ENCODE measurements at regions of chr6 and their contacts with region 1.

Region 1: GRCh38 chr6:116060572-116061283 is at the start of gene FRK:
- DNase-seq: peak; percentile 93
- ATAC-seq: peak; percentile 97
- H3K4me3 ChIP-seq: peak within 1 kb of the TSS; percentile 74 to 90 (median 88)
- H3K27ac ChIP-seq: peak within 1 kb of the TSS; percentile 87
- H3K4me1 ChIP-seq: peaks cover 37% of the 10 kb centered on the region
- H3K27me3 ChIP-seq: no peaks in the 10 kb centered on the region; a peak in 1 of 5 replicates
- CTCF ChIP-seq: no peak
- EP300 ChIP-seq: 0 out of 4 replicates have a peak, but pooled peaks of 1 of the 2 experiments have one; percentile 34
- POLR2A ChIP-seq: peak; percentile 78 to 88
- RAD21 ChIP-seq: no peak
- total RNA-seq, gene FRK: 2.9 and 4.5 TPM in 2 replicates

Region 2: GRCh38 chr6:116010790-116011401 is 49.8 kb before region 1 on chr6:
- CTCF ChIA-PET with region 1: interaction called, 3 read pairs
- POLR2A ChIA-PET with region 1: interaction called, 23 read pairs
- in situ Hi-C with region 1: no loop called
- intact Hi-C with region 1: loop called (anchors 1 kb)
- DNase-seq: peak; percentile 75
- ATAC-seq: peak; percentile 84
- H3K4me3 ChIP-seq: no peak overlapping the region
- H3K27ac ChIP-seq: no peak overlapping the region
- H3K4me1 ChIP-seq: peaks cover 54% of the 10 kb centered on the region
- H3K27me3 ChIP-seq: no peaks in the 10 kb centered on the region
- CTCF ChIP-seq: peak; percentile 89
- EP300 ChIP-seq: no peak
- POLR2A ChIP-seq: no peak
- RAD21 ChIP-seq: peak; percentile 66

Region 3: DNA sequence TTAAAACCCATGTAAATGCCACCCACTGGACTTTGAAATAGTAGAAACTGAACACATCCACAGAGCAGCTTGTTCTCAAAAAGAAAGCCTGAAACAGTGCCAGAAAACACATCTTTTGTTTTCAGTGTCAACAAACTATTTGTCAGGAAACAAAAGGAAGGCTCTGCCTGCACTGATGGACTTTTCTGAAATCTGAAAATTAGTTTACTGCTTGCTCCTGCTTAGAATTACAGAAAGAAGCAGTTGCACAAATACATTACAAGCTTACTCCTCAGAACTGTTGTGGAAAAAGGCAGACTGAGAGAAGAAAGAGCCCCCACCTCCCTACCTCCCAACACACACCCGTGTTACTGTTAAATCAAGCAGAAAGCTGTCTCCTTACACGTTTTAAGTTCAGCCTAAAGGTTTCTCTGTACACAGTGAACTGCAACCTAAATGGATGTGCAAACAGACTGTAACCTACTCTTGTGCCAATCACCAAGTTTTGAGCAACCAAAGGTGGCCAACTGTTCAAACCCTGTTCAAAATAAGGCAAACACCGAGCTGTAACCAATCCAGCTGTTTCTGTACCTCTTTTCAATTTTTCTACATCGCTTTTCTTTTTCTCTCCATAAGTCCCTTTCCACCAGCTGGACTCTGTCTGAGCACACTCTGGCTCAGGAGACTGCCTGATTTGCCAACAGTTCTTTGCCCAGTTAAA is 43.7 kb before region 1 on chr6:
- CTCF ChIA-PET with region 1: no interaction called
- POLR2A ChIA-PET with region 1: interaction called, 23 read pairs
- in situ Hi-C with region 1: no loop called
- intact Hi-C with region 1: no loop called
- DNase-seq: peak; percentile 56
- ATAC-seq: peak; percentile 81
- H3K4me3 ChIP-seq: peak overlapping the region; percentile 21 to 38 (median 34); a peak in 5 of 6 replicates
- H3K27ac ChIP-seq: peak overlapping the region; percentile 70
- H3K4me1 ChIP-seq: peaks cover 78% of the 10 kb centered on the region
- H3K27me3 ChIP-seq: no peaks in the 10 kb centered on the region
- CTCF ChIP-seq: no peak
- EP300 ChIP-seq: peak in 1 of 2 experiments; percentile 74; a peak in 1 of 4 replicates
- POLR2A ChIP-seq: no peak
- RAD21 ChIP-seq: no peak

Region 4: DNA sequence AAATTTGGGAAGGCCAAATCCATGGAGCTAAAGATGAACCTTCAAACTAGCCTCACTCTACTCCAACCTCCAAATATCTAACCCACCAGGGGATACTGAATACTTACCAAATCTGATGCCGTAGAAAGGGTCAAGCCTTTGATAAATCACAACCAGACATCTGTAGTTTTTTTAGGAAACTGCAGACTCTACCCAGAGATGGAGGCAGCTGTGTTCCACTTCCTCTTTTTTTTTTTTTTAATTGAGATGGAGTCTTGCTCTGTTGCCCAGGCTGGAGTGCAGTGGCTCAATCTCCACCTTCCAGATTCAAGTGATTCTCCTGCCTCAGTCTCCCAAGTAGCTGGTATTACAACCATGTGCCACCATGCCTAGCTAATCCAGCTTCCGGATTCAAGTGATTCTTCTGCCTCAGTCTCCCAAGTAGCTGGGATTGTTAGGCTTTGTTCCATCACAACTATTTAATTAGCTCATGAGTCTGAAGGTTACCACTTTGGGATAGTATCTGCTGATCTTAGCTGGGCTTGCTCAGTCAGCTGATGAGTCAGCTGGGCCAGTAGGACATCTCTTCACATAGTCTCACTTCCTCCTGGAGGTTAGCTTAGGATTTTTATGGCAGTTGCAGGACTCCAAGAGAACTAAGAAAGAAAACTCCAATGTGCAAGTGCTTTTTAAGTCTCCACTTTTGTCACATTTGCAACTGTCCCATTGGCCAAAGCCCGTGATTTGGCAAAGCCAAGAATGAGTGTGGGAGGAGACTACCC is 13.4 kb before region 1 on chr6:
- CTCF ChIA-PET with region 1: no interaction called
- POLR2A ChIA-PET with region 1: interaction called, 11 read pairs
- in situ Hi-C with region 1: no loop called
- intact Hi-C with region 1: no loop called
- DNase-seq: peak; percentile 59
- ATAC-seq: peak; percentile 89
- H3K4me3 ChIP-seq: no peak overlapping the region
- H3K27ac ChIP-seq: no peak overlapping the region
- H3K4me1 ChIP-seq: peaks cover 27% of the 10 kb centered on the region
- H3K27me3 ChIP-seq: no peaks in the 10 kb centered on the region
- CTCF ChIP-seq: no peak
- EP300 ChIP-seq: no peak
- POLR2A ChIP-seq: no peak
- RAD21 ChIP-seq: no peak

Region 5: DNA sequence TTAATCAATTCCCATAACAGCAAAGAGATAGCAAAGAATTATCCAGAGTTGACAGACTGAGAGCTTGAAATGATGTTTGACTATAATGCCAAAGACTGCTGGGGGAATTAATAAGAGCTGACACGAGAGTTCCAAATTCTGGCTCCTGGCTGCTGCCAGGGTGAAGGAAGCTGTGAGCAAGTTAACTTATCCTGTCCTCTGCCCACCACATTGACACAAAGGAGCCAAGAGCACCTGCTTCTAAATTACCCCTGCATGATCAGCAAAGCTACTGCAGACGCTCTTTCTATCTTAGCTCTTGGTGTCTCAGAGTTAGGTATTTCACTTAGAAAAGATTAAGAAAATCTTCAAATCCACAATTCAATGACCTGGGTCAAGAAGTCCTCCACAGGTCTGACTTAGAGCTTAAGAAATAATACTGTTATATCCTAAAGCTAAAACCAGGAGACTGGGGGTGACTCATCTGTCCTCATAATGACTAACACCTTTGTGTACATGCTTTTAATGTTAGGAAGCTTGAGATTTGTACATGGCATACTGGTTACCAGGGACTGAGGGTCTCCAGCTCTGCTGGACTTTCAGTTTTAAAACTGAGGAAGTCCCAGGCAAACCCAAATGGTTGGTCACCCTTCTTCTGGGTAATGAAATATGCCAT is 13.2 kb after region 1 on chr6:
- CTCF ChIA-PET with region 1: no interaction called
- POLR2A ChIA-PET with region 1: interaction called, 27 read pairs
- in situ Hi-C with region 1: no loop called
- intact Hi-C with region 1: loop called (anchors 1 kb)
- DNase-seq: peak; percentile 75
- ATAC-seq: peak; percentile 84
- H3K4me3 ChIP-seq: no peak overlapping the region
- H3K27ac ChIP-seq: no peak overlapping the region
- H3K4me1 ChIP-seq: peaks cover 58% of the 10 kb centered on the region
- H3K27me3 ChIP-seq: no peaks in the 10 kb centered on the region
- CTCF ChIP-seq: no peak
- EP300 ChIP-seq: peak in 1 of 2 experiments; percentile 67; a peak in 1 of 4 replicates
- POLR2A ChIP-seq: no peak
- RAD21 ChIP-seq: no peak

Measured in HepG2 (cell line).